Caco-2 (cell line): ENCODE measurements at regions of chr15 and their contacts with region 1.

Region 1: DNA sequence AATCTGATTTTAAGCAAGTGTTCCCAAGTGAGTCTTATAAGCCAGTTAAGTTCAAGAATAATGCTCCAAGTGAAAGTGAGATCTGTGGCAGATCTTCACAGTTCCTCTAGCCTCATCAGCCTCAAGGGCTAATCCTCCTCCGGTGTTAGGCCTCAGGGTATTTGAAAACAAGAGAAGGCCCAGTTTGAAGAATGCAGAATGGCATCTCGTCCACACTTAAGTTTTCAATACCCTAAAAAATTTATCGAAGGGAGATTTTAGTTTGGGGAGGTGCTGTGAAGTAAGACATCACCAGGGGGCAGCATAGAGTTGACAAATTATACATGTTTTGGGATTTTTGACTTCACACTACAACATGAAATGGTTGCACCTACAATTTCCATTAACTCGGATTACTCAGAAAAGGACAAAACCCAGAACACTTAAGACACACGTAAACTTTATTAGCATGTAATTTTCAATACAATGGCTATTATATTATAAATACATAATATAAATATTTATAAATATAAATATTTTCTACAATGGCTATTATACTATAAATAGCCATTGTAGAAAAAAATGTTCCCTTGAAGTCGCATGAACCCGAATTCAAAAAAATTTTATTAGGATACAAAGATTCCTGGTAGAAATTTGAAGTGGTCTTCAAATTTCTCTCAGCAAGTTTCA is 2.3 kb upstream of the TMEM266 start:
- DNase-seq: peak in 1 of 2 experiments; percentile 46
- H3K4me3 ChIP-seq: no peak overlapping the region
- H3K4me3 Mint-ChIP-seq: peak overlapping the region; percentile 41
- H3K27ac Mint-ChIP-seq: no peak overlapping the region
- H3K4me1 ChIP-seq: peaks cover 4% of the 10 kb centered on the region; the same call in 1 of the 2 replicates
- H3K4me1 Mint-ChIP-seq: peaks cover 8% of the 10 kb centered on the region
- H3K27me3 ChIP-seq: no peaks in the 10 kb centered on the region
- H3K27me3 Mint-ChIP-seq: peaks cover 7% of the 10 kb centered on the region
- CTCF ChIP-seq: peak; percentile 76 to 82

Region 2: GRCh38 chr15:75661091-75661777 is 396.2 kb before region 1 on chr15:
- CTCF ChIA-PET with region 1: no interaction called
- POLR2A ChIA-PET with region 1: no interaction called
- intact Hi-C with region 1: no loop called
- DNase-seq: peak; percentile 59 to 60
- H3K4me3 ChIP-seq: no peak overlapping the region
- H3K4me3 Mint-ChIP-seq: no peak overlapping the region
- H3K27ac Mint-ChIP-seq: peak overlapping the region; percentile 5
- H3K4me1 ChIP-seq: peaks cover 56% of the 10 kb centered on the region
- H3K4me1 Mint-ChIP-seq: peaks cover 54% of the 10 kb centered on the region
- H3K27me3 ChIP-seq: no peaks in the 10 kb centered on the region
- H3K27me3 Mint-ChIP-seq: no peaks in the 10 kb centered on the region
- CTCF ChIP-seq: no peak

Region 3: GRCh38 chr15:75903331-75904239 is 153.9 kb before region 1 on chr15 and contains the start of gene FBXO22:
- CTCF ChIA-PET with region 1: no interaction called
- POLR2A ChIA-PET with region 1: interaction called, 16 read pairs
- intact Hi-C with region 1: no loop called
- DNase-seq: peak; percentile 89 to 94
- H3K4me3 ChIP-seq: peak within 1 kb of the TSS; percentile 83
- H3K4me3 Mint-ChIP-seq: peak within 1 kb of the TSS; percentile 99
- H3K27ac Mint-ChIP-seq: peak within 1 kb of the TSS; percentile 98
- H3K4me1 ChIP-seq: peaks cover 17% of the 10 kb centered on the region
- H3K4me1 Mint-ChIP-seq: peaks cover 10% of the 10 kb centered on the region
- H3K27me3 ChIP-seq: no peaks in the 10 kb centered on the region
- H3K27me3 Mint-ChIP-seq: no peaks in the 10 kb centered on the region
- CTCF ChIP-seq: no peak
- total RNA-seq, gene FBXO22: 43.9 and 47.7 TPM in 2 replicates

Region 4: GRCh38 chr15:75921729-75922703 is 135.4 kb before region 1 on chr15:
- CTCF ChIA-PET with region 1: no interaction called
- POLR2A ChIA-PET with region 1: no interaction called
- intact Hi-C with region 1: loop called (anchors 10 kb)
- DNase-seq: peak; percentile 44 to 62
- H3K4me3 ChIP-seq: no peak overlapping the region
- H3K4me3 Mint-ChIP-seq: no peak overlapping the region
- H3K27ac Mint-ChIP-seq: no peak overlapping the region
- H3K4me1 ChIP-seq: peaks cover 16% of the 10 kb centered on the region; the same call in 1 of the 2 replicates
- H3K4me1 Mint-ChIP-seq: peaks cover 15% of the 10 kb centered on the region
- H3K27me3 ChIP-seq: no peaks in the 10 kb centered on the region
- H3K27me3 Mint-ChIP-seq: no peaks in the 10 kb centered on the region
- CTCF ChIP-seq: peak; percentile 42 to 59

Region 5: DNA sequence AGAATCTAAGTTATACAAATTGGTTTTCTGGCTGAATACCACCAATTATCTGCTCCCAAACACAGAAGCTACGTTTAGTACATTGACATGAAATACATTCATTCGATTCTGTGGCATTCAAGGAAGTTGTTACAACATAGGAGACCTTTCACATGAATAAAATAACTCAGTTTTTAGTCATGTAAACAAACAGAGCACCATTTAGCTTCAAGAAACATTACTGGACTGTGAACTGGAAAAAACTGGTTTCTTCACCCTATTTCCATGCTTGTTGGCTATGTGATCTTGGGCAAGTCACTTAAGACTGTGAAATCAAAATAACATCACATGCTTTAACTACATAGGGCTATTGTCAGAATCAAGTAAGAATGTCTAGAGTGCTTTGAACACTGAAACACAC is 91.4 kb before region 1 on chr15:
- CTCF ChIA-PET with region 1: interaction called, 6 read pairs
- POLR2A ChIA-PET with region 1: no interaction called
- intact Hi-C with region 1: loop called (anchors 10 kb)
- DNase-seq: no peak
- H3K4me3 ChIP-seq: no peak overlapping the region
- H3K4me3 Mint-ChIP-seq: no peak overlapping the region
- H3K27ac Mint-ChIP-seq: no peak overlapping the region
- H3K4me1 ChIP-seq: peaks cover 19% of the 10 kb centered on the region
- H3K4me1 Mint-ChIP-seq: peaks cover 17% of the 10 kb centered on the region
- H3K27me3 ChIP-seq: no peaks in the 10 kb centered on the region
- H3K27me3 Mint-ChIP-seq: no peaks in the 10 kb centered on the region
- CTCF ChIP-seq: no peak

Region 6: DNA sequence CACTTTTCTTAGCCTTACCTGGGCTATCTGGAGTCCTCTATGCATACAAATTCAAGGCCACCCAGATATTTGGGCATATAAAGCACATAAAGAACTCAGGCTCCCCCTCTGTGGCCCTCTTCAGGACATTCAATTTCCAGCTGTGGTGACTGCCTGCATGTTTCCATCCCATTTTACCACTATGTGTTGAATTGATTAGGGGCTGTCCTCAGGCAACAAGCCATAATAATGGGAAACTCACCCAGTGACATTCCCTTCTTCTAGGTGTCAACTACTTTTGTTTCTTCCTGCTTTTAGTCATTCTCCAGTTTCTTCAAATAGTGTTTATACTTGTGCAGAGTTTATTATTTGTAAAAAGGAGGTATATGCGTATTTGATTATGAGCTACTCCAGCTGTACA is 63.2 kb before region 1 on chr15:
- CTCF ChIA-PET with region 1: no interaction called
- POLR2A ChIA-PET with region 1: no interaction called
- intact Hi-C with region 1: no loop called
- DNase-seq: no peak
- H3K4me3 ChIP-seq: no peak overlapping the region
- H3K4me3 Mint-ChIP-seq: no peak overlapping the region
- H3K27ac Mint-ChIP-seq: no peak overlapping the region
- H3K4me1 ChIP-seq: no peaks in the 10 kb centered on the region
- H3K4me1 Mint-ChIP-seq: peaks cover 4% of the 10 kb centered on the region
- H3K27me3 ChIP-seq: no peaks in the 10 kb centered on the region
- H3K27me3 Mint-ChIP-seq: no peaks in the 10 kb centered on the region
- CTCF ChIP-seq: no peak

Region 7: GRCh38 chr15:76098685-76099084 is 41.2 kb after region 1 on chr15:
- CTCF ChIA-PET with region 1: interaction called, 5 read pairs
- POLR2A ChIA-PET with region 1: no interaction called
- intact Hi-C with region 1: loop called (anchors 2 kb)
- DNase-seq: peak; percentile 45 to 64
- H3K4me3 ChIP-seq: no peak overlapping the region
- H3K4me3 Mint-ChIP-seq: no peak overlapping the region
- H3K27ac Mint-ChIP-seq: no peak overlapping the region
- H3K4me1 ChIP-seq: no peaks in the 10 kb centered on the region; the same call in 1 of the 2 replicates
- H3K4me1 Mint-ChIP-seq: peaks cover 12% of the 10 kb centered on the region
- H3K27me3 ChIP-seq: no peaks in the 10 kb centered on the region
- H3K27me3 Mint-ChIP-seq: peaks cover 3% of the 10 kb centered on the region
- CTCF ChIP-seq: no peak

Region 8: GRCh38 chr15:76139368-76140073 is 82.1 kb after region 1 on chr15:
- CTCF ChIA-PET with region 1: interaction called, 125 read pairs
- POLR2A ChIA-PET with region 1: no interaction called
- intact Hi-C with region 1: loop called (anchors 1 kb)
- DNase-seq: peak; percentile 71 to 78
- H3K4me3 ChIP-seq: no peak overlapping the region
- H3K4me3 Mint-ChIP-seq: no peak overlapping the region
- H3K27ac Mint-ChIP-seq: no peak overlapping the region
- H3K4me1 ChIP-seq: no peaks in the 10 kb centered on the region
- H3K4me1 Mint-ChIP-seq: peaks cover 4% of the 10 kb centered on the region
- H3K27me3 ChIP-seq: peaks cover 1% of the 10 kb centered on the region; the same call in 1 of the 2 replicates
- H3K27me3 Mint-ChIP-seq: peaks cover 10% of the 10 kb centered on the region
- CTCF ChIP-seq: peak; percentile 78 to 90